ENCODE measurements at regions of chr2 and their contacts with region 1.

Region 1: DNA sequence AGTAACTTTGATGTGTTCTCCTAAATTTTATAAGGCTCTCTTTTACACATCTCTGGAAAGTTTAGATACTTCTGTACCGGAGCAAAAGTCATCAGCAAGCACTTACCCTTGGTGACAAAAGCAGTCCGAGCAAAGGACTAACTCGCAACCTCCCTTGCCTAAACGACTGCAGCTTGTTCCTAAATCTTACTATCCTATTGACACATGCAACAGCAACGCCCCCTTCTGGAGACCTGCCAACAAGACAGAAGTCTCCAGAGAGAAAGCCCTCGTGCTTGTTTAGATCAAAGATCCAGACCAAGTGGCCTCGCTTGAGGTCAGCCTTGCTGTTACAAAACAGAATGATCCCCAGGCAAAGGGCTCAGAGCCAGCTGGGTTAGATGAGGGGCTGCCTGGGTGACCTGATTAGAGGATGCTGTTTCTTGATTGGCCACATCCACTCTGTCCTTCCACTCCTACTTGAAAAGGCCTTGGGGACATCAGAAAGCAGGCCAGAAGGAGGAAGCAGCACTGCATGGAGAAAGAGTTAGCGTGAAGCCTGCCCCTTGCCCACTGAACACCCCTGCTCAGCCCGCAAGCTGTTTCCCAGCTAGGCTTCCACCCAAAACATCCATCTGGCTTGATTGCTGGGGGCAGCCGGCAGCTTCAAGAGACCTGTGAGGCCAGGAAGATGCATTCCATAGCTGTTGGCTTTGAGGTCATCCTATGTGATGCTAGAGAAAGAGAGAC is 94.3 kb downstream of the HNRNPLL start:
- DNase-seq: peak; percentile 89
- H3K4me3 ChIP-seq: no peak overlapping the region
- H3K27ac ChIP-seq: peak overlapping the region in 3 of 8 donors; percentile 7 to 36 (median 25)
- H3K4me1 ChIP-seq: peaks cover 0 to 19% (median 9%) of the 10 kb centered on the region in 6 donors
- H3K27me3 ChIP-seq: no peaks in the 10 kb centered on the region
- CTCF ChIP-seq: peak; percentile 48 to 80 (median 62)
- POLR2A ChIP-seq: no peak

Region 2: DNA sequence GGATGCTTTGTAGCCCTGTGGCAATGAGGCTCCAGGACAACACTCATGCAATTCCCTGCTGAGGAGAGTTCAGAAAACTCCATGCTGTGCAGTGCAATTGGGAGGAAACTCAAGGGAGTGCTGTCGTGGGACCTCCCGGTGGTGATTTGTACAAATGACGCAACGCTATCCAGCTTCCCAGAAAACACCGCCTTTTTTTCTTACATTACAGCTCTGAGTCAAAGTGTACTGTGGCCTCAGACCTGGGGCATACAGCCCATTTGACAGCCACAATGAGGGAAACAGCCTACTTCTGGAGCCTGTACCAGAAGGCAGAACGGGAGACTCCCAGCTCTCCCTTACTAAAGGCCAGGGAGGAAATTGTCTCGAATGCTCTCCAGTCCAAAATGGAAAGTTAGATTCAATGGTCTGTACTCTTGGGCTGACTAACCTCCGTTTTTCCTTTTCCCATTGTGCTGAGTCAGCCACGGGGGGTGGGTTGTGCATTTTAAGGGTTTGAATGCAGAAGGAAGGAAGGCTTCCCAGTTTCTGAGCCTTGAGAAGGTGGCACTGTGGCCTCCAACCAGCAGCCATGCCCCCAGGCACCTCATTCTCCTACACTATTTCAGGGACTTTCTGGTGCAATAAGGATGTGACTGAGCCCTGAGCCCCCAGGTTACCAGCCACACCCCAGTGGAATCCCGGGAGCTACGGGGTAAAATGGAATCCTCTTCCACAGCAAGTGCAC is 416.1 kb before region 1 on chr2:
- intact Hi-C with region 1: no loop called
- DNase-seq: no peak
- H3K4me3 ChIP-seq: no peak overlapping the region
- H3K27ac ChIP-seq: peak overlapping the region in 7 of 8 donors; percentile 4 to 66 (median 55)
- H3K4me1 ChIP-seq: peaks cover 6 to 38% (median 17%) of the 10 kb centered on the region in 6 donors
- H3K27me3 ChIP-seq: peaks cover 0 to 25% (median 0%) of the 10 kb centered on the region in 7 donors
- CTCF ChIP-seq: no peak
- POLR2A ChIP-seq: no peak

Region 3: GRCh38 chr2:38315707-38316333 is 192.7 kb before region 1 on chr2:
- intact Hi-C with region 1: loop called (anchors 10 kb)
- DNase-seq: no peak
- H3K4me3 ChIP-seq: no peak overlapping the region
- H3K27ac ChIP-seq: no peak overlapping the region
- H3K4me1 ChIP-seq: peaks cover 0 to 6% (median 0%) of the 10 kb centered on the region in 6 donors
- H3K27me3 ChIP-seq: no peaks in the 10 kb centered on the region
- CTCF ChIP-seq: peak; percentile 11 to 75 (median 63)
- POLR2A ChIP-seq: no peak